Mammary epithelial cell (primary cell): ENCODE measurements at regions of chr10 and their contacts with region 1.

Region 1: DNA sequence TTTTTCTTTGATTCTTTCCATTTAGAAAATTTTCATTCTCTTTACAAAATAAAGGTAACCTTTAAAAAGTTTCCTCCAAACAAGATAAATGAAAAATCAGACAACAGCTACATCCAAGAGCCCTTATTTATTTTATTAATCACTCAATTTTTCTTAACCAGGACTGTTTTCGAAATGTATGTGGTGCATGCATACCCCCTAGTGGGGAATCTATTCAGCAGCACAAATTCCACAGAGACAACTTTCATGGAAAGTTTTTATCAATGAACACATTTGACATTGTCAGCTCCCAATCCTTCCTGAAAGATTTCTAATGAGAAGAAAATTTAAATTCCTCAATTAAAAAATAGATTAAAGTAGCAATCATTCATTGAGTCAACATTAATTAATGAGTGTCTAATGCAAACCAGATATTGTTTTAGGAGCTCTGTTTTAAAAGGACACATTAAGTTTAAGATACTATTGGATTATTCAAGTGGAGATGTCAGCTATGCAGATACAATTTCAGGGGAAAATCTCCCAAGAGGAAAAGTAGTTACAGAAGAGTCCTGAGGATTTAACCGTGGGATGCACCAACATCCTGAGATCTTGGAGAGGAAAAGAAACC is 5.2 kb upstream of the HTR7 start:
- DNase-seq: peak; percentile 35
- H3K4me3 ChIP-seq: no peak overlapping the region
- H3K27ac ChIP-seq: no peak overlapping the region
- H3K4me1 ChIP-seq: peaks cover 16% of the 10 kb centered on the region
- H3K27me3 ChIP-seq: no peaks in the 10 kb centered on the region
- CTCF ChIP-seq: peak; percentile 81 to 93

Region 2: GRCh38 chr10:90437452-90437851 is 425.6 kb before region 1 on chr10:
- CTCF ChIA-PET with region 1: interaction called, 5 read pairs
- dilution Hi-C with region 1: no loop called
- in situ Hi-C with region 1: loop called in 1 of 2 experiments (anchors 25 kb)
- intact Hi-C with region 1: loop called (anchors 10 kb)
- DNase-seq: peak; percentile 31
- H3K4me3 ChIP-seq: no peak overlapping the region
- H3K27ac ChIP-seq: no peak overlapping the region
- H3K4me1 ChIP-seq: no peaks in the 10 kb centered on the region
- H3K27me3 ChIP-seq: no peaks in the 10 kb centered on the region
- CTCF ChIP-seq: peak in 1 of 2 donors; percentile 41

Region 3: DNA sequence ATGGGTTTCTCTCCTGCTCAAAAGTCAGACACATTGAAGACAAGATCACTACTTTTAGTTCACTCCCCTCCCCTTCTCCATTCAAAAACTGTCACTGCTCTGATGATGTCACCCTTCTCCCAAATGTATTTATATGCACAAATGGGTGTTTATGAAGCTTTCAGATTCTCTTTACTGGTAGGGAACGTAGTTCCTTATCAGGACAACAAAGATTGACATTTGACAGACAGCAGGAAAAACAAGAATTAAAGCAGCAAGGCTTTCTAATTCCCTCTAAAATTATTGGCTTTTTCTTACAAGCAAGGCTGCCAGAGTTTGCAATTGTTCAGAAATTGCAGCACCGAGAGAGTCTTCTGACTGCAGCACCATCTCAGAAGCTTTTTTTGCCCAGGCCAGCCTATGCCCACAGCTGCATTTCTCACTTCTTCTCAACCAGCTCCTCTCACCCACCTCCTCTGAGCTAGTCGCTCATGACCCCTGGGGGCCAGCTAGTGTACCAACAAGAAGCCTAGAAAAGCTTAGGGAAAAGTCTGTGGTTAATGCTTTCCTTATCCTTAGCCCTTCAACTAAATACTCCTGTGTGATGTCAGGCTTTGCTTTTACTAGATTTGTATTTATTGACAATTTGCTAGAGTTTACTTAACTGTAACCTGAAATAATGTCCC is 270.2 kb before region 1 on chr10:
- CTCF ChIA-PET with region 1: no interaction called
- dilution Hi-C with region 1: no loop called
- in situ Hi-C with region 1: no loop called
- intact Hi-C with region 1: loop called (anchors 2 kb)
- DNase-seq: peak; percentile 62
- H3K4me3 ChIP-seq: no peak overlapping the region
- H3K27ac ChIP-seq: no peak overlapping the region
- H3K4me1 ChIP-seq: peaks cover 4% of the 10 kb centered on the region
- H3K27me3 ChIP-seq: no peaks in the 10 kb centered on the region
- CTCF ChIP-seq: peak; percentile 63 to 79

Region 4: DNA sequence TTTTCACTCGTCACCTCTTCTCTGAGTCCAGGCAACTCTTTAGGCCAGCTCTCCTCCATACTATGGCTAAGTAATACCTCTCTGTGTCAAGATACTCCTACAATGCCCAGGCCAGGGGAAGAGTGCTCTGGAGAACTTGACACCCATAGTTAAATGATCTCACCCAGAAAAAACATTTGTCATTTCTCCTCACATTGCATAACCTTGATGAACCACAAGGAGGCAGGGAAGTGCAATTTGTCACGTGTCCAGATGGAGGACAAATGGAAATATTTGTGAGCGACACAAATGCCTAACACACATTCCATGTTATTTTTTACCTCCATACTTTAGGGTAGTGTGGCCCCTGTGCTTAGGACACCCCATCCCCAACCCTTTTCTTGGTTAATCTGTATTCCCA is 83.5 kb before region 1 on chr10:
- CTCF ChIA-PET with region 1: no interaction called
- dilution Hi-C with region 1: no loop called
- in situ Hi-C with region 1: no loop called
- intact Hi-C with region 1: loop called (anchors 1 kb)
- DNase-seq: peak; percentile 35
- H3K4me3 ChIP-seq: no peak overlapping the region
- H3K27ac ChIP-seq: no peak overlapping the region
- H3K4me1 ChIP-seq: peaks cover 25% of the 10 kb centered on the region
- H3K27me3 ChIP-seq: no peaks in the 10 kb centered on the region
- CTCF ChIP-seq: peak; percentile 44 to 50